ENCODE measurements at regions of chr17 and their contacts with region 1.

Region 1: GRCh38 chr17:79393358-79394202 is 217.3 kb downstream of the RBFOX3 start:
- DNase-seq: peak; percentile 74
- H3K4me3 Mint-ChIP-seq: no peak overlapping the region
- H3K27ac Mint-ChIP-seq: no peak overlapping the region
- H3K4me1 Mint-ChIP-seq: no peaks in the 10 kb centered on the region
- H3K27me3 Mint-ChIP-seq: peaks cover 65% of the 10 kb centered on the region

Region 2: DNA sequence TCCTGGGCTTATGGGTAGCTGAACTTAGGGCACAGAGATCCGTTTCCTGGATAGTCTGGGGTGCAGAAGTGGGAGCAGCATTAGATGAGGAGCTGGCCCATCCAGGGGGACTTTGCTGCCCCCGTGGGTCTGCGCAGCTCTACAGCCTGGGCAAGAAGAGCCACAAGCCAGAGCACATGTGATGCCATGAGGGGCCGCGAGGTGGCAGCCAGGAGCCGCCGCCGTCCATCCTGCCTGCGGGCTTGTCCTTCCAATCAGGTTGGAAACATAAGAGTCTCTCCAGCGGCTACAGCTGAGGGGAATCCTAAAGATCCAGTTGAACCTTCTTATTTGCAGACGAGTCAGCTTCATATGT is 347.8 kb before region 1 on chr17:
- CTCF ChIA-PET with region 1: interaction called, 19 read pairs
- DNase-seq: peak; percentile 74
- H3K4me3 Mint-ChIP-seq: no peak overlapping the region
- H3K27ac Mint-ChIP-seq: no peak overlapping the region
- H3K4me1 Mint-ChIP-seq: no peaks in the 10 kb centered on the region
- H3K27me3 Mint-ChIP-seq: peaks cover 22% of the 10 kb centered on the region

Region 3: DNA sequence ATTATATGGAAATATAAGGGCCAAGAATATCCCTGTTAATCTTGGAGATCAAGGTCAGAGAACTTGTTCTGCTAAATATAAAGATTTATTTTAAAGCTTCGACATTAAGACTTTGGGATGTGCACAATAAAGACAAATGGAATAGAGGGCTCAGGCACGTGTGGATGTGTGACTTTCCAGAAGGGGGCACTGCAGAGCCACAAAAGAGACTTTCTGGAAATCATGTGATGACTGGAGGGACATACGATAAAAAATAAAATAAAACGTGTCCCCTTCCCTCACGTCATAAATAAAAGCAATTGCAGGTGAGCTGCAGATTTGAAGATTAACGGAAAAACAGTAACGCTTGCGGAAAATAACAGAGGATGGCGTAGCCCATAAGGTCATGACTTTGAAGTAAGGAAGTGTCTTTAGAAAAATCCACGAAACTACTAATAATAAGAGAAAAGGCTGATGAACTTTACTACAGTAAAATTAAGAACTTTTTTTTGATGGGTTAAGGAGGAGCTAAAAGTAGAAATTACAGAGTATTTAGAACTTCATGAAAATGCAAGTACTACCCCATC is 328.4 kb before region 1 on chr17:
- CTCF ChIA-PET with region 1: interaction called, 17 read pairs
- DNase-seq: peak; percentile 74
- H3K4me3 Mint-ChIP-seq: no peak overlapping the region
- H3K27ac Mint-ChIP-seq: no peak overlapping the region
- H3K4me1 Mint-ChIP-seq: peaks cover 4% of the 10 kb centered on the region
- H3K27me3 Mint-ChIP-seq: peaks cover 6% of the 10 kb centered on the region

Region 4: GRCh38 chr17:79087428-79088143 is 306.0 kb before region 1 on chr17:
- CTCF ChIA-PET with region 1: interaction called, 125 read pairs
- DNase-seq: peak; percentile 83
- H3K4me3 Mint-ChIP-seq: no peak overlapping the region
- H3K27ac Mint-ChIP-seq: no peak overlapping the region
- H3K4me1 Mint-ChIP-seq: peaks cover 3% of the 10 kb centered on the region
- H3K27me3 Mint-ChIP-seq: peaks cover 7% of the 10 kb centered on the region

Region 5: DNA sequence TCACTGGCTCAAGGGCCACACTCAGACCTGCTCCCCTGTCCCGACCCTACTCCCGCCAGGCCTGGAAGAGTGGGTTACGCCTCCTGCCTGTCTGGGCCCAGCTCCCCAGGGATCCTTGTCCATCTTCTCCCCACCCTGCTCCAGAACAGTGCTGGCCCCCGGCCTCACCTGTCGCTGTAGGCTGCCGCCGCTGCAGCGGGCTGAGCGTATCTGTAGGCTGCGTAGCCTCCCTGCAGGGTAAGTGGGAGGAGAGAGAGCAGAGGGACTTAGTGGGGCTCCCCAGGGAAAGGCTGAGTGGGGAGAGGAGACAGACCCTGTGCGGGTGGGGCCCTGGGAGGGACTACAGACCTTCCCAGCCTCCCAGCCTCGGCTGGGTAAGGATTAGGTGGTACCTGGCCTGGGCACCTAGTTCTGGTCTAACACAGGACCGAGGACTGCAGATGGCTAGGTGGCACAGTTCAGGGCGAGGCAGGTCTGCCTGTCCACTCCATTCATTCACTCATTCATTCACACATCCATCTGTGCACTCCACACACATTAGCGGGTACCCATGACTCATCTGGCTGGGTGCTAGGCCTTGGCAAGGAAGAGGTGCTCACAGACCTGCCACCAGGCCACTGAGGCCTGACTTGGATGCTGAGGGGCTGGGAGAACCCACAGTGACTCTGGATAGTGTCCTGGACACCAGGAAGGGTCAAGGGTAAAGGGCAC is 298.1 kb before region 1 on chr17:
- CTCF ChIA-PET with region 1: interaction called, 125 read pairs
- DNase-seq: no peak
- H3K4me3 Mint-ChIP-seq: no peak overlapping the region
- H3K27ac Mint-ChIP-seq: no peak overlapping the region
- H3K4me1 Mint-ChIP-seq: peaks cover 9% of the 10 kb centered on the region
- H3K27me3 Mint-ChIP-seq: peaks cover 84% of the 10 kb centered on the region

Region 6: DNA sequence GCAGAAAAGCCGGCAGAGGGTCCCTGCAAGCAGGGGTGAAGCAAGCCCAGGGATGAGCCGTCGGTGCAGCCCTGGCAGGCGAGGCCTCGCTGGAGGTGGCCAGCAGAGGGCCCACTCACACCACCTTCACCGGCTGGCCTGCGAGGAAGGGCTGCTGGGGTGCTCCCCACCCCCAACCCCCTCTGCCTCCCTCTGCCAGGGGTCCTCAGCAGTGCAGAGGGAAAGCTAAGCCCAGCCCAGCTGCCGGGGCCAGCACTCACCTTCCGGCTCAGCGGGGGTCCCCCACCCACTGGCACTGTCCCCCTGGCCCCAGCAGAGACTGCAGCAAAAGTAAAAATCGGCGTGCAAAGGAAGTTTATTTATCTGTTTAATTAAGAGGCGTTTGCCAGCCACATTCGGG is 205.5 kb before region 1 on chr17:
- CTCF ChIA-PET with region 1: interaction called, 24 read pairs
- DNase-seq: peak; percentile 29
- H3K4me3 Mint-ChIP-seq: no peak overlapping the region
- H3K27ac Mint-ChIP-seq: no peak overlapping the region
- H3K4me1 Mint-ChIP-seq: peaks cover 3% of the 10 kb centered on the region
- H3K27me3 Mint-ChIP-seq: peaks cover 87% of the 10 kb centered on the region

Region 7: GRCh38 chr17:79406316-79406715 is 12.7 kb after region 1 on chr17:
- CTCF ChIA-PET with region 1: interaction called, 30 read pairs
- DNase-seq: no peak
- H3K4me3 Mint-ChIP-seq: no peak overlapping the region
- H3K27ac Mint-ChIP-seq: no peak overlapping the region
- H3K4me1 Mint-ChIP-seq: peaks cover 2% of the 10 kb centered on the region
- H3K27me3 Mint-ChIP-seq: peaks cover 79% of the 10 kb centered on the region